PC-9 (cell line): ENCODE measurements at regions of chr11 and their contacts with region 1.

Region 1: DNA sequence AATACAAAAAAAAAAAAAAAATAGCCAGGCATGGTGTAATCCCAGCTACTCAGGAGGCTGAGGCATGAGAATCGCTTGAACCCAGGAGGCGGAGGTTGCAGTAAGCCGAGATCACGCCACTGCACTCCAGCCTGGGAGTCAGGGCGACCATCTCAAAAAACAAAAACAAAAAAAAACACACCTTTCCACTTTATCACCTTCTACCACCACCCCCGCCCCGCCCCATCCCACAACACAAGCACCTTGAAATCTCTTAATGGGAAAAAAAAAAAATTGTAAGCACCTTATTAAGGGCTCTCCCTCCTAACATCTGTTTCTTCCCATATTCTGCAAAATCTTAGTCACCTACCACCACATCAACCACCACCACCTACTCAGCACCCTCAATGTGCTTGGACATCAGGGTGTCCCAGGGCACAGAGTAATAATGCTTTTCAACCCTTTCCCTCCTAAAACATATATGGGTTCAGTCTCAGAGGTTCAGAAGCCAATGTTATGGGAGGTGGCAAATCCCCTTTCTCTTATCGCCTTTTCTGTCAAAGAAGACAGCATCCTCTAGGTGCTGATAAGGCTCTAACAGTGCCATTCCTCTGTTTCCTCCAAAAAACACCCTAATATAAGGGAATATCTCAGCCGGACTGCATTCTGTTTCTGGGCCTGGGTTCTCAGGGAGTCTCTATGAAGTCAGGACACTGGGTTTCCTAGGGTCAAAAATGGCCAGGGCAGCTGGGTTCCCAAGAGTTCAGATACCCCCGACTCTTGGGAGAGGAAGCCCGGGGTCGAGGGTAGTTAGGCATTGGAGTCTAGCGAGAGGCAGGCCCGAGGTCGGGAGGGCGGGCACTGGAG is 718 bp downstream of the INTS5 start:
- DNase-seq: no peak
- H3K4me3 ChIP-seq: peak overlapping the region; percentile 96
- H3K27ac ChIP-seq: peak overlapping the region; percentile 75
- H3K4me1 ChIP-seq: peaks cover 15% of the 10 kb centered on the region
- H3K27me3 ChIP-seq: no peaks in the 10 kb centered on the region
- CTCF ChIP-seq: no peak

Region 2: GRCh38 chr11:62487738-62488551 is 164.4 kb before region 1 on chr11:
- CTCF ChIA-PET with region 1: no interaction called
- POLR2A ChIA-PET with region 1: no interaction called
- intact Hi-C with region 1: no loop called
- DNase-seq: no peak
- H3K4me3 ChIP-seq: no peak overlapping the region
- H3K27ac ChIP-seq: no peak overlapping the region
- H3K4me1 ChIP-seq: no peaks in the 10 kb centered on the region
- H3K27me3 ChIP-seq: no peaks in the 10 kb centered on the region
- CTCF ChIP-seq: no peak

Region 3: GRCh38 chr11:62536301-62536957 is 116.0 kb before region 1 on chr11:
- CTCF ChIA-PET with region 1: no interaction called
- POLR2A ChIA-PET with region 1: no interaction called
- intact Hi-C with region 1: no loop called
- DNase-seq: no peak
- H3K4me3 ChIP-seq: no peak overlapping the region
- H3K27ac ChIP-seq: no peak overlapping the region
- H3K4me1 ChIP-seq: peaks cover 40% of the 10 kb centered on the region
- H3K27me3 ChIP-seq: no peaks in the 10 kb centered on the region
- CTCF ChIP-seq: no peak

Region 4: DNA sequence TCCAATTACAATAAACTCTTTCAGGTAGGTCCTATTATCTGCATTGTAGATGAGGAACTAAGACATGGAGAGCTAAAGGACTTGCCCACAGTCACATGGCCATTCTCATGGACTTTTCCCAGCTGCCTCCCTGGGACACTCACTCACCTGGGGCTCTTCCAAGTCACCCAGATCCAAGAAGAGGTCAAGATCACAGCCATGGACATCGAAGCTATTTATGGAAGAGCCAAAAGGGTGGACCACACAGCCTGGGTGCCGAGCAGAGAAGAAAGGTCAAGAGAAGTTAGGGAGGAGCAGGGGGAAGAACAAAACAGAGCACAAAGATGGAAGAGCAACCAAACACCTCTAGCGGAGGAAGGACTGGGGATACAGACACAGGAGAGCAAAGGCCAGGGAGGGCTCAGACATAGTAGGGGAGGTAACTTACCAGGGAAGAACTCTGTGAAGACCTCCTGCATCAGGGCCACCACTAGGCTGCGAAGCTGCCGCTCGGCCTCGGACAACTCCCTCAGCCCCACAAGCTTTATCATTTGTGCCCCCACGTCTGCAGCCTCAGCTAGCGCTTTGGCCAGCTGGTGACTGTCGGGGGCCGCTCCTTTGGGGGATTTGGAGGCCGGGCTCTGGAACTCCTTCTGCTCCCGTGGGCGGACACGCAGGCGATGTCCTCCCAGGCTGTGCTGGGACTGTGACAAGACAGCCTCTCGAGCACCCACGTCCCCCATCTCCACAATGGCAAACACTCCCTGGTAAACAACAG is 71.2 kb before region 1 on chr11:
- CTCF ChIA-PET with region 1: no interaction called
- POLR2A ChIA-PET with region 1: no interaction called
- intact Hi-C with region 1: no loop called
- DNase-seq: no peak
- H3K4me3 ChIP-seq: no peak overlapping the region
- H3K27ac ChIP-seq: no peak overlapping the region
- H3K4me1 ChIP-seq: peaks cover 13% of the 10 kb centered on the region
- H3K27me3 ChIP-seq: no peaks in the 10 kb centered on the region
- CTCF ChIP-seq: no peak

Region 5: GRCh38 chr11:62601394-62602140 is 50.8 kb before region 1 on chr11 and contains the start of gene MTA2:
- CTCF ChIA-PET with region 1: no interaction called
- POLR2A ChIA-PET with region 1: interaction called, 15 read pairs
- intact Hi-C with region 1: no loop called
- DNase-seq: peak; percentile 97 to 100
- H3K4me3 ChIP-seq: peak within 1 kb of the TSS; percentile 95
- H3K27ac ChIP-seq: peak within 1 kb of the TSS; percentile 67
- H3K4me1 ChIP-seq: peaks cover 17% of the 10 kb centered on the region
- H3K27me3 ChIP-seq: no peaks in the 10 kb centered on the region
- CTCF ChIP-seq: no peak
- total RNA-seq, gene MTA2: 96.6 and 120 TPM in 2 replicates

Region 6: DNA sequence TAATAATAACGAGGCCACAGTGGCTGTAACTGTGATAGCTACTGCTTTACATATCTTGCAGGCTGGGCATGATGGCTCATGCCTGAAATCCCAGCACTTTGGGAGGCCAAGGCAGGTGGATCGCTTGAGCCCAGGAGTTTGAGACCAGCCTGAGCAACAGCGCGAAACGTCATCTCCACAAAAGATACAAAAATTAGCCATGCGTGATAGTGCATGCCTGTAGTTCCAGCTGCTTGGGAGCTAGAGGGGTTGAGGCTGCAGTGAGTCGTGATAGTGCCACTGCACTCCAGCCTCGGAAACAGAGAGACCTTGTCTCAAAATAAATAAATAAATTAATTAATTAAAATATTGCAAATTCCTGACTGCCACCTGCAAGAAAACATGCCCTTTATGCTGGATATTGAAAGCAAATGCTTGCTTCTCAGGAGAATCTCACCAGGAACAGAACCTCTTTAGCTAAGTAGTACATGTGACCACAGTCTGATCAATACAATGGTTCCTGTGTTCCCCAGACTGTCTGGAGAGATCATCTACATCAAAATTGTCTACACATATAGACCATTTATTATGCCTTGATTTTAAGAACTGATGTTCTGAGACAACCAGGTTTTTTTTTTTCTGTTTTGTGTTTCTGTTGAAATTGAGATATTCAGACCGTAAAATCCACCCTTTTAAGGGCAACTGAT is 95.2 kb after region 1 on chr11:
- CTCF ChIA-PET with region 1: no interaction called
- POLR2A ChIA-PET with region 1: interaction called, 13 read pairs
- intact Hi-C with region 1: no loop called
- DNase-seq: no peak
- H3K4me3 ChIP-seq: no peak overlapping the region
- H3K27ac ChIP-seq: peak overlapping the region; percentile 38
- H3K4me1 ChIP-seq: peaks cover 3% of the 10 kb centered on the region; the same call in 1 of the 2 replicates
- H3K27me3 ChIP-seq: no peaks in the 10 kb centered on the region
- CTCF ChIP-seq: no peak

Region 7: GRCh38 chr11:62787005-62787759 is 134.8 kb after region 1 on chr11 and contains the start of gene TMEM179B:
- CTCF ChIA-PET with region 1: no interaction called
- POLR2A ChIA-PET with region 1: no interaction called
- intact Hi-C with region 1: no loop called
- DNase-seq: peak; percentile 98
- H3K4me3 ChIP-seq: peak within 1 kb of the TSS; percentile 60
- H3K27ac ChIP-seq: peak within 1 kb of the TSS; percentile 74
- H3K4me1 ChIP-seq: peaks cover 32% of the 10 kb centered on the region
- H3K27me3 ChIP-seq: no peaks in the 10 kb centered on the region
- CTCF ChIP-seq: peak; percentile 29
- total RNA-seq, gene TMEM179B: 45.5 and 48.3 TPM in 2 replicates